Cardiac septum (tissue), 1 donor: ENCODE measurements at regions of chr11 and their contacts with region 1.

Region 1: GRCh38 chr11:57345555-57346211 is 7.5 kb downstream of the P2RX3 start:
- DNase-seq: no peak

Region 2: DNA sequence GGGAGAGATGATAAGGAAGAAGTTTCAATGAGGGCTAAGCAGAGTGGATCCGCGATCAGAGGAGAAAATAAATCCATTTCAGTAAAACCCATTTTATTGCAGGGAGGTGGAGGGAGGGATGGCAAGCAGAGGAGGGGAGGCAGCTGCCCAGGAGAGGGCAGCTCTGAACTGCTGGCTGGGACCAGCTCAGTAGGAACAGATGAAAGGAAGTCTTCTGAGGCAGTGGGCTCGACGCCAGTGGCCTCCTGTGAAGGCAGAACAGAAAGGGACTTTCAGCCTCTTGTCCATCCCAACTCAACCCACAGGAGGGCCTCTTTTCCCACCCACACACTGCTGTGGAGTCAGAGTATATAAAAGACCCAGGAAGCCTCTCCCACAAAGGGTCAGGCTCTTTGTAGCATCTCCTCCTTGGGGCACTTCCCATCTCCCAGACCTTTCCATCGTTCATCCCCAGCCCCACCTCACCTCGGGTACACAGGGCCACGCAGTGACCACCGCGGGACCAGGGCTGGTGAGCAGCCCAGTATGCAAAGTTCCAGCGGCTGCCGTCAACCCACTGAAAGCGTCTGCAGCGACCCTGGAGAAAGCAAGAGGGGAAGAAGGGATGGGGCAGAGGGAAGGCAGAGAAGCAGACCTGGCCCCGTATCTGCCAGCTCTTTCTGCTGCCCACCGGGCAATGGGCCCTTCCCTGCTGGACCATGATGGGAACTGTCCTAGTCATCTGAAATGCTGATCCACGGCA is 41.8 kb after region 1 on chr11:
- intact Hi-C with region 1: no loop called
- DNase-seq: peak; percentile 62

Region 3: GRCh38 chr11:57426929-57427726 is 81.4 kb after region 1 on chr11 and contains the start of gene SLC43A3:
- intact Hi-C with region 1: loop called (anchors 5 kb)
- DNase-seq: peak; percentile 89
- total RNA-seq, gene SLC43A3: 26.7 TPM

Region 4: GRCh38 chr11:57480409-57481137 is 134.9 kb after region 1 on chr11:
- intact Hi-C with region 1: loop called (anchors 2 kb)
- DNase-seq: no peak

Region 5: GRCh38 chr11:57644748-57645688 is 299.3 kb after region 1 on chr11:
- intact Hi-C with region 1: loop called (anchors 5 kb)
- DNase-seq: peak; percentile 88